ENCODE measurements at regions of chr1 and their contacts with region 1.

Region 1: DNA sequence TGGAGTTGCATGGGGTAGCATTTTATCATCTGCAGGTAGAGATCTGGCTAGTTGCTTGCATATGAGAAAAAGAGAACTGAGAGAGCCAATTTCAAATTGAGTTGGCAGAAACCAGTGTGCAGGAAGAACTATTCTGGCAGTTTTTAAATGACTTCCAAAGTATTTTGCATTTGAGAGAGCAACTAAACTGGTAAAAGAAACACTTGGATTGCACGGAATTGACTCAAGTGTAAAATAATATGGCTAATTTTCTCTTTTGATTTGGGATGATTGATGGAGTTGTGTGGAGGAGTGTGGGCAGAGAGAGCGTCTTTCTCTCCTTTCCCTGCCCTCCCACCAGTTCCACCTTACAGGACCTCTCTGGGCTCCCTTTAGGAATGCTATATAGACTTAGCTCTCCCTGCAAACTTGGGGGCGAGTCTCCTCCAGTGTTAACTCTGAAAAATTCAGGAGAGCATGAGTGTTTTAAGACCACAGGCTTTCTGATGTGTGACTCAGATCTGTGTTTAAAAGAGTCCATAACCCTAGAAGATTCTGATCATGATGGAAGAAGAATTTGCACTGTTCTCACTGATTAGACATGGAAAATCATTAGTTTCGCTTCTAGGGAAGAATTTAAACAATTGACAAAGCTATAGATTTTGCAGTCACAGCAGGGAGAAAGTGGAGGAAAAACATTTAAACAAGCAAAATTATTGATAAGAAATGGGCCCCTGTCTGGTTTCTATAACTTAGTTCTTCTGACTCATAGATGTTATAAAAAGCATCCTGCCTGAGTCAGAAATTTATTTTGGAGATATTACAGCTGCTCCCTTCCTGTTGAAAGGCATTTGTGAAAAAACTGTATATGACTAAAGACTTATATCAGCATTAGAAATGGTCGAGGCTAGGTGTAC is 24.9 kb upstream of the CTBS start:
- DNase-seq: peak; percentile 93
- H3K4me3 ChIP-seq: peak overlapping the region in 1 of 3 experiments; percentile 7
- H3K27ac ChIP-seq: peak overlapping the region; percentile 96
- H3K4me1 ChIP-seq: peaks cover 36% of the 10 kb centered on the region
- H3K27me3 ChIP-seq: no peaks in the 10 kb centered on the region
- CTCF ChIP-seq: no peak
- POLR2A ChIP-seq: no peak

Region 2: DNA sequence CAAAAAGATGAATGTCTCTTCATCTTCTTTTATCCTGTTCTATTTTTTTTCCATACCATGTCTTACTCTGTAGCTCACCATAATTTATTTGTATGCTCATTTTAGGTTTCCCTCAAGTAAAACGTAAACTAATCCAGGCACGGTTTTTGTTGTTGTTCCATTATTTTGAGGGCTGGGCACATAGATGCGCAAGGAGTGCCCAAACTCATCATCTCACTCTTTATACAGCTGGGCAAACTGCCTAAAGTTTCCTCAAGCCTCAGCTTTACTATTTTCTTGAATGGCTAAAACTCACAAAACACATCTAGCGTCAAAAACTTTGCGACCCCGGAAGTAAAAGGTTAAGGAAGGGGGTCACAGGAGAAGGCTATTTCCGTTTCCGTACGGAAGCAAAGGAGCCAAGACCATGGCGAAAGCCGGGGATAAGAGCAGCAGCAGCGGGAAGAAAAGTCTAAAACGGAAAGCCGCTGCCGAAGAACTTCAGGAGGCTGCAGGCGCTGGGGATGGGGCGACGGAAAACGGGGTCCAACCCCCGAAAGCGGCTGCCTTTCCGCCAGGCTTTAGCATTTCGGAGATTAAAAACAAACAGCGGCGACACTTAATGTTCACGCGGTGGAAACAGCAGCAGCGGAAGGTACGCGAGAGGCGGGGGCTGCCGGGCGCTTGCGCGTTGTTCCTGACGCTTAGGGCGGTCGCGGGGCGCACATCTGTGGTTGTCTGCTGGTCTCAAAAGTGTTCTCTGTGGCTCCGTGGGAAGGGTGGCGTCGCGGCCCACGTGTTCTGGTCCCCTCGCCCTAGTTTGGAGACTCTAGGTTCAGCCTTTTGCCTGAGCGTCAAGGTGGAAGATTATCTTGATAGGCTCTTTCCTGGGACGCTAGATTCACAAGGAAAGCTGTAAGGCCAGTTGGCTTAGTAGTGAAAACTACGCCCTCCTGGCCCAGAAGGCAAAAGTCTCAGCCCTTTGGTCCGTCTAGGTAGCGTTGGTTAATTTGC is 119.9 kb before region 1 on chr1 and contains the start of gene RPF1:
- CTCF ChIA-PET with region 1: interaction called, 18 read pairs
- POLR2A ChIA-PET with region 1: interaction called, 3 read pairs
- dilution Hi-C with region 1: no loop called
- intact Hi-C with region 1: loop called (anchors 1 kb)
- DNase-seq: peak; percentile 85
- H3K4me3 ChIP-seq: peak within 1 kb of the TSS; percentile 59 to 95 (median 64)
- H3K27ac ChIP-seq: peak within 1 kb of the TSS; percentile 66
- H3K4me1 ChIP-seq: peaks cover 17% of the 10 kb centered on the region
- H3K27me3 ChIP-seq: no peaks in the 10 kb centered on the region
- CTCF ChIP-seq: no peak
- POLR2A ChIP-seq: peak; percentile 68
- total RNA-seq, gene RPF1: 32.6 and 34.3 TPM in 2 replicates

Region 3: GRCh38 chr1:84573967-84574842 is 24.9 kb before region 1 on chr1 and contains the start of gene CTBS:
- CTCF ChIA-PET with region 1: interaction called, 17 read pairs
- POLR2A ChIA-PET with region 1: interaction called, 19 read pairs
- dilution Hi-C with region 1: no loop called
- intact Hi-C with region 1: loop called (anchors 1 kb)
- DNase-seq: peak; percentile 85
- H3K4me3 ChIP-seq: peak within 1 kb of the TSS; percentile 40 to 69 (median 62)
- H3K27ac ChIP-seq: peak within 1 kb of the TSS; percentile 98
- H3K4me1 ChIP-seq: peaks cover 17% of the 10 kb centered on the region
- H3K27me3 ChIP-seq: no peaks in the 10 kb centered on the region
- CTCF ChIP-seq: no peak
- POLR2A ChIP-seq: peak; percentile 86
- total RNA-seq, gene CTBS: 10.7 and 14.3 TPM in 2 replicates